ENCODE measurements at regions of chr17 and their contacts with region 1.

Region 1: DNA sequence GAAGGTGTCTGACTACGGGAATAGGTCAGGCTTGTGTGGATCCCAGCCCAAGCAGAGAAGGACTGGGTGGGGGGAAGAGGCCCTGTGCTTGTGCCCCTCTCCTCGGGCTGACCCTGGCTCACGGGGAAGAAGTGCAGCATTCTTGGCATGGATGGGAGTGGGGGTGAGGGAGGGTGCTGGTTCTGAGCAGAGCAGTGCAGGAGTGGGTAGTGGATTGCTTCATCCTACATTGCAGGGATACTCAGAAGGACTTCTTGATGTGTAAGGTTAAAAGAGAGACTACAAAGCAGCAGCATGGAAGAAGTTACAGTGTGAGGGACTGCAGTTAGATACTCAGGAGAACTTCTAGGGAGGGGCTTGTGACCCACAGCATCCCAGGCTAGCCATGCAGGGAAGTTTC is 2.1 kb downstream of the ARHGAP23 start:
- DNase-seq: no peak
- CTCF ChIP-seq: no peak

Region 2: GRCh38 chr17:38485146-38485468 is 54.8 kb after region 1 on chr17:
- in situ Hi-C with region 1: loop called (anchors 10 kb)
- DNase-seq: no peak
- CTCF ChIP-seq: no peak

Region 3: GRCh38 chr17:38656959-38657823 is 226.9 kb after region 1 on chr17:
- in situ Hi-C with region 1: loop called (anchors 10 kb)
- DNase-seq: peak; percentile 18
- CTCF ChIP-seq: no peak

Measured in GM13976 (cell line).